WTC11 (cell line): ENCODE measurements at regions of chr3 and their contacts with region 1.

Region 1: DNA sequence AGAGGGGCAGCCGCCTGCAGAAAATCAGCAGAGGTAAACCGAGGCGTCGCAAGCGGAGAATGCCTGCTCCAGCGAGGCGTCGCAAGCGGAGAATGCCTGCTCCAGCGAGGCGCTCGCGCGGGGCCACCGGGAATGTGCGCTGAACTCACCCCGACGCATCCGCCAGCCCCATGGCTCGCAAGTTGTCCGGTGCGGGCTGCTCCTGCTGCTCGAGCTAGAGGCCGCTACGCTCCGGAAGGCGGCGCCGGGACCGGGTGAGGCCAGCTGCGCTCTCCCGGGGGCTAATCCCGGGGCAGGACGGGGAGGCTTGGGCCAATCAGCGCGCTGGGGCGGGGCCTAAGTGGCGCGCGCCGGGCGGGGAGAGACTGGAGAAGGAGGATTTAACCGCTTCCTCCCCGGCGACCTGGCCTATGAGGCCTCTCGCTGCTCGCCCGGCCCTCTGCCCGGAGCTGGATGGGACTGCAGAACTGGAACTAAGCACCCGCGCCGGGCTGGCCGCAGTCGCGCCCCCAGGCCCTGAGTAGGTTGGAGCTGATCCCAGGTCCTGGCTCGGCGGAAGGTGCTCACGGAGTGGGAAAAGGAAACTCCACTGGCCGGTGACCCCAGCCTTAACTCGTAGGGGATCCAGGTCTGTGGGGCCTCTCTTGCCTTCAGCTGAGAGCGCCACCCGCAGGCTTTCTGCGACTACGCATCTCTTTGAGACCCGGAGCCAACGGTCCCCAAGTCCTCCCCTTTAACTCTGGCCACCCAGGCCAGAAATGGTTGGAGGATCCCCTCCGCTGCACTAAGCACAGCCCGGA is at the start of gene SLC26A6:
- DNase-seq: peak; percentile 99
- ATAC-seq: peak; percentile 91
- H3K4me3 Mint-ChIP-seq: peak within 1 kb of the TSS; percentile 84
- H3K27ac Mint-ChIP-seq: peak within 1 kb of the TSS; percentile 94
- H3K4me1 Mint-ChIP-seq: peaks cover 32% of the 10 kb centered on the region
- H3K27me3 Mint-ChIP-seq: no peaks in the 10 kb centered on the region
- CTCF ChIP-seq: peak; percentile 62
- total RNA-seq, gene SLC26A6: 57.2 to 58.9 TPM (median 57.8 TPM) in 3 replicates

Region 2: DNA sequence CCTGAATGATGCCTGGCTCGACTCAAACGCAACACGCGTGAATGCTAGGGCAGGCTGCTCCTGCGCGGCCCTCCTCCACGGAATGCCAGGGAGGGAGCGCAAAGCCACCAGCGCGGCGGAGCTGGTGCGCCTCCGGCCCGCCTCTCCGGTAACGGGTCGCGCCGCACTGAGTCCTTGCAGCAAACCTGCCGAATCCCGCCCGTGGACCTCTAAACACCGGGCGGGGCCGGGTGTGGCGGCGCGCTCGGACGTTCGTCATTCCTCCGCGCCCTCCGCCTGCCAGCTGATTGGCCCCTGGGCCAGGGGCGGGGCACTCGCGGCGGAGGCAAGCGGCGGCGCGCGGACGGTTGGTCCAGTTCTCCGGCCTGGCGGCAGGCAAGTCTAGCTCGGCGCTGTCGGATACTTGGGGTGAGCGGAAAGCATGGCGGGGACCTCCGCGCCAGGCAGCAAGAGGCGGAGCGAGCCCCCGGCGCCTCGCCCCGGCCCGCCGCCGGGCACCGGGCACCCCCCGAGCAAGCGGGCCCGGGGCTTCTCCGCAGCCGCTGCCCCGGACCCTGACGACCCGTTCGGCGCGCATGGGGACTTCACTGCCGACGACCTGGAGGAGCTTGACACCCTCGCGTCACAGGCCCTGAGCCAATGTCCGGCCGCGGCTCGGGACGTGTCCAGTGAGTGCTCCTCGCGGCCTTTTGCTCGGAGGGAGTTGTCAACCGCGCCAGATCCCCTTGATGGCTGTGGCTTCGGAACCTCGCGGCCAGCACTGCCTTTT is 188.8 kb before region 1 on chr3 and contains the start of gene ATRIP:
- CTCF ChIA-PET with region 1: interaction called, 10 read pairs
- POLR2A ChIA-PET with region 1: no interaction called
- DNase-seq: peak; percentile 93
- ATAC-seq: peak; percentile 92
- H3K4me3 Mint-ChIP-seq: peak within 1 kb of the TSS; percentile 94
- H3K27ac Mint-ChIP-seq: peak within 1 kb of the TSS; percentile 89
- H3K4me1 Mint-ChIP-seq: peaks cover 26% of the 10 kb centered on the region
- H3K27me3 Mint-ChIP-seq: no peaks in the 10 kb centered on the region
- CTCF ChIP-seq: no peak
- total RNA-seq, gene ATRIP: 15.5 to 18.2 TPM (median 15.6 TPM) in 3 replicates

Region 3: GRCh38 chr3:48548729-48549705 is 86.4 kb before region 1 on chr3:
- CTCF ChIA-PET with region 1: interaction called, 20 read pairs
- POLR2A ChIA-PET with region 1: no interaction called
- DNase-seq: peak; percentile 91
- ATAC-seq: peak; percentile 97
- H3K4me3 Mint-ChIP-seq: no peak overlapping the region
- H3K27ac Mint-ChIP-seq: peak overlapping the region; percentile 87
- H3K4me1 Mint-ChIP-seq: peaks cover 16% of the 10 kb centered on the region
- H3K27me3 Mint-ChIP-seq: no peaks in the 10 kb centered on the region
- CTCF ChIP-seq: peak; percentile 76

Region 4: GRCh38 chr3:48623851-48624547 is 11.4 kb before region 1 on chr3:
- CTCF ChIA-PET with region 1: interaction called, 44 read pairs
- POLR2A ChIA-PET with region 1: interaction called, 4 read pairs
- DNase-seq: no peak
- ATAC-seq: no peak
- H3K4me3 Mint-ChIP-seq: no peak overlapping the region
- H3K27ac Mint-ChIP-seq: no peak overlapping the region
- H3K4me1 Mint-ChIP-seq: peaks cover 7% of the 10 kb centered on the region
- H3K27me3 Mint-ChIP-seq: no peaks in the 10 kb centered on the region
- CTCF ChIP-seq: no peak

Region 5: GRCh38 chr3:48663415-48664312 is 28.2 kb after region 1 on chr3:
- CTCF ChIA-PET with region 1: interaction called, 51 read pairs
- POLR2A ChIA-PET with region 1: interaction called, 41 read pairs
- DNase-seq: peak; percentile 99
- ATAC-seq: peak; percentile 79
- H3K4me3 Mint-ChIP-seq: peak overlapping the region; percentile 88
- H3K27ac Mint-ChIP-seq: peak overlapping the region; percentile 100
- H3K4me1 Mint-ChIP-seq: peaks cover 14% of the 10 kb centered on the region
- H3K27me3 Mint-ChIP-seq: no peaks in the 10 kb centered on the region
- CTCF ChIP-seq: peak; percentile 64; the same call in 1 of the 2 replicates